Activated CD4-positive, alpha-beta T cell treated with anti-CD3 and anti-CD28 coated beads for 36 hours (primary cell): ENCODE measurements at regions of chr18 and their contacts with region 1.

Region 1: DNA sequence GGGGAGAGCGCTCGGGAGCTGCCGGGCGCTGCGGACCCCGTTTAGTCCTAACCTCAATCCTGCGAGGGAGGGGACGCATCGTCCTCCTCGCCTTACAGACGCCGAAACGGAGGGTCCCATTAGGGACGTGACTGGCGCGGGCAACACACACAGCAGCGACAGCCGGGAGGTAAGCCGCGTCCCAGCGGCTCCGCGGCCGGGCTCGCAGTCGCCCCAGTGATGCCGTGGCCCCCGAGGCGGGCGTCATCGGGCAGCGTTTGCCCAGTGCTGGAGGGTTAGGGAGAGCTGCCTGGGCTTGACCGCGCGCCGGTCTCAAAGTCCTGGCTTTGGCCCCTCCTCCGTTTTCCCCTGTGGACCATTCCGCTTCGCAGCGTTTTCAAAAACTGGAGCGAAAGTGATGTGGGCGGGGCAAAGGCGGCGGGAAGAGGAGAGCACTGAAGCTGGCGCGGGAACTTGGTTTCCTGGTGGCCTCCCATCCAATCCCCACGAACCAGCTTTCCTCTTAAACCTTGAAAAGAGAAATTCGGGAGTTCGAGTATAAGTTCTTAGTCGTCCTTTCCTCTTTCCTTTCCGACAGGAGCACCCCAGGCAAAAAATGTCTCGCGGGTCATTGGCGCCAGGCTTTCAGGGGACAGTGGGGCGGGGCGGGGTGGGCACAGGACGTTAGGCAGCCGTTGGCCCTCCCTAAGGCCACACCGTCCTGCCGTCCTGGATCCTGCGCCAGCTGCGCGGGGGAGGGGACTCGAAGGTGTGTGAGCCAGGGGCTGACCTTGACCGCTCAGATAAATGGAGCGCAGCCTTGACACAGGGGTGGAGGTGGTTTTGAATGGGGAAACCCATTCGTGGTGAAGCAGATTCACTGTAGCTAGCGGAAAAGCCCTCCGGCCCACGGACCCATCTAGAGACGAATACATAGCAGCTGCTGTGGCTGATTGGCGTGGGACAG is 821 bp downstream of the TYMS start:
- DNase-seq: peak; percentile 85
- ATAC-seq: peak; percentile 65
- H3K4me3 Mint-ChIP-seq: peak overlapping the region; percentile 93
- H3K27ac Mint-ChIP-seq: peak overlapping the region; percentile 90
- H3K4me1 Mint-ChIP-seq: peaks cover 12% of the 10 kb centered on the region
- H3K27me3 Mint-ChIP-seq: peaks cover 20% of the 10 kb centered on the region

Region 2: GRCh38 chr18:158128-159036 is 499.9 kb before region 1 on chr18 and contains the start of gene USP14:
- CTCF ChIA-PET with region 1: no interaction called
- POLR2A ChIA-PET with region 1: no interaction called
- intact Hi-C with region 1: loop called in 1 of 2 experiments (anchors 2 kb)
- DNase-seq: peak; percentile 99
- ATAC-seq: peak; percentile 97
- H3K4me3 Mint-ChIP-seq: peak within 1 kb of the TSS; percentile 89
- H3K27ac Mint-ChIP-seq: peak within 1 kb of the TSS; percentile 87
- H3K4me1 Mint-ChIP-seq: peaks cover 31% of the 10 kb centered on the region
- H3K27me3 Mint-ChIP-seq: no peaks in the 10 kb centered on the region
- total RNA-seq, gene USP14: 94.7 to 101 TPM

Region 3: GRCh38 chr18:623761-624620 is 34.3 kb before region 1 on chr18:
- CTCF ChIA-PET with region 1: interaction called, 13 read pairs
- POLR2A ChIA-PET with region 1: interaction called, 3 read pairs
- intact Hi-C with region 1: no loop called
- DNase-seq: peak; percentile 81
- ATAC-seq: peak; percentile 83
- H3K4me3 Mint-ChIP-seq: no peak overlapping the region
- H3K27ac Mint-ChIP-seq: peak overlapping the region; percentile 10
- H3K4me1 Mint-ChIP-seq: no peaks in the 10 kb centered on the region
- H3K27me3 Mint-ChIP-seq: peaks cover 2% of the 10 kb centered on the region

Region 4: GRCh38 chr18:681985-682384 is 23.7 kb after region 1 on chr18:
- CTCF ChIA-PET with region 1: no interaction called
- POLR2A ChIA-PET with region 1: interaction called, 3 read pairs
- intact Hi-C with region 1: loop called in 1 of 2 experiments (anchors 1 kb)
- DNase-seq: peak; percentile 76
- ATAC-seq: peak; percentile 96
- H3K4me3 Mint-ChIP-seq: no peak overlapping the region
- H3K27ac Mint-ChIP-seq: peak overlapping the region; percentile 84
- H3K4me1 Mint-ChIP-seq: peaks cover 22% of the 10 kb centered on the region
- H3K27me3 Mint-ChIP-seq: no peaks in the 10 kb centered on the region

Region 5: DNA sequence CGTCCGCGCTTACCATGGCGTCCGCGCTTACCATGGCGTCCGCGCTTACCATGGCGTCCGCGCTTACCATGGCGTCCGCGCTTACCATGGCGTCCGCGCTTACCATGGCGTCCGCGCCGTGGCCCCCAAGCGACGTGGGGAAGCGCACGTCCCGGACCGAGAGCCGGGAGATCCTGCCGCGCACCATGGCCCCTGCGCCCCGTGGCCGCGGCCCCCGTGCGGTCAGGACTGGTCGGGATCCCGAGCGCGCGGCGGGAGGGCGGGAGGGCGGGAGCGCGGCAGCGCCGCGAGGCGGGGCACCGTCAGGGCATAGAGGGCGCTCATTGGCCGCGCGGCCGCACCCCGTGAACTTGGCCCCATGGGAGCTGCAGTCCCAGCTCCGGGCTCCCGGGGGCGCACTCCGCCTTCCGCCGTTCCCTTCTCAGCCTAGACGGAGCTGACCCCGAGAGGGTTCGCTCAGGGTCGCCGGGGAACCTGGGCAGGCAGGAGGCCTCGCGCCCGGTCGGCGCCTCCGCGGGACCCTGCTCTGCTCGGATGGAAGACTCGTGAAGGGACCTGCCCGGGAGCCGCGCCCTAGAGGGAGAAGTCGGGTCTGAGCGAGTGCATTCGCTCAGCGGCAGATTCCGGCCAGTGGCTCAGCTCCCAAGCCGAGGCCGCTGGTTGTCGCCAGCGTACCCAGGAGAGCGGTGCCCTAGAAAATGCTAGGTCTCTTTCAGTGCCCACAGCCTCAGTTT is 54.3 kb after region 1 on chr18 and contains the start of gene ENOSF1:
- CTCF ChIA-PET with region 1: interaction called, 5 read pairs
- POLR2A ChIA-PET with region 1: interaction called, 6 read pairs
- intact Hi-C with region 1: loop called (anchors 1 to 2 kb)
- DNase-seq: peak; percentile 95
- ATAC-seq: peak; percentile 91
- H3K4me3 Mint-ChIP-seq: peak within 1 kb of the TSS; percentile 94
- H3K27ac Mint-ChIP-seq: peak within 1 kb of the TSS; percentile 99
- H3K4me1 Mint-ChIP-seq: peaks cover 53% of the 10 kb centered on the region
- H3K27me3 Mint-ChIP-seq: no peaks in the 10 kb centered on the region
- total RNA-seq, gene ENOSF1: 92.6 to 97.4 TPM

Region 6: GRCh38 chr18:830315-830901 is 172.1 kb after region 1 on chr18:
- CTCF ChIA-PET with region 1: interaction called, 10 read pairs
- POLR2A ChIA-PET with region 1: no interaction called
- intact Hi-C with region 1: no loop called
- DNase-seq: peak; percentile 28
- ATAC-seq: peak; percentile 63
- H3K4me3 Mint-ChIP-seq: peak overlapping the region; percentile 29
- H3K27ac Mint-ChIP-seq: peak overlapping the region; percentile 69
- H3K4me1 Mint-ChIP-seq: peaks cover 27% of the 10 kb centered on the region
- H3K27me3 Mint-ChIP-seq: no peaks in the 10 kb centered on the region

Region 7: DNA sequence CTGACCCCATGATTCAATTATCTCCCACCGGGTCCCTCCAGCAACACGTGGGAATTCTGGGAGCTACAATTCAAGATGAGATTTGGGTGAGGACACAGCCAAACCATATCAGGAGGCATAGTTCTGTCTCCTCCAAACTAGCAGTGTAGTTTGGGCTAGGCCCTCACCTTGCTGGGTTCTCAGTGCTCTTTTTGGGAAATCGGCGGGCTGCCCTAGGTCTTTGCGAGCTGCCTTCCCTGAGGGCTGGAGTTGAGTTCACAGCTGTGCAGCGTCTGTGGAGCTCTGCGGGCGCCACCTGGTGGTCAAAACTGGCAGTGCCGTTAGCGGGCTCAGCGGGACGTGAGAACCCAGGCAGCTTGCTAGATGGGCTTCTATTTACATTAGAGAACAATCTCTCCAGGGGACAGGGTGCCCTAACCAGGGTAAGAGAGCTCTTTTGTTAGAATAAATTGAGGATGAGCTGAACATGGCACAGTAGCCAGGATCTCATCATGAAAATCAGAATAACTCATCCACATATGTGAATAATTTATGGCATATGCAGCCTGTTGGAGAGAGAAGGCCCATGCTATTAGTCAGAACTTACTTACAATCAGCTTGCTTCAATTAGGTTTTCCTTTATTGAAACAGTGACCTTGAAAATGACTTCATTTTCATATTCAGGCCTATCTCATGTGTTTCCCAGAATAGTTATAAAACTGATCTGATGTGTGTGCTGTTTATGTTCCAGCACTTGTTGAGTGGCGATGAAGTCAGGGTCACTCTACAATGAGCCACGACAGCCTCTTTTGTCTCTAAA is 181.1 kb after region 1 on chr18:
- CTCF ChIA-PET with region 1: interaction called, 7 read pairs
- POLR2A ChIA-PET with region 1: interaction called, 17 read pairs
- intact Hi-C with region 1: no loop called
- DNase-seq: peak; percentile 94
- ATAC-seq: peak; percentile 99
- H3K4me3 Mint-ChIP-seq: no peak overlapping the region
- H3K27ac Mint-ChIP-seq: no peak overlapping the region
- H3K4me1 Mint-ChIP-seq: no peaks in the 10 kb centered on the region
- H3K27me3 Mint-ChIP-seq: peaks cover 5% of the 10 kb centered on the region